ENCODE measurements at regions of chr19 and their contacts with region 1.

Region 1: DNA sequence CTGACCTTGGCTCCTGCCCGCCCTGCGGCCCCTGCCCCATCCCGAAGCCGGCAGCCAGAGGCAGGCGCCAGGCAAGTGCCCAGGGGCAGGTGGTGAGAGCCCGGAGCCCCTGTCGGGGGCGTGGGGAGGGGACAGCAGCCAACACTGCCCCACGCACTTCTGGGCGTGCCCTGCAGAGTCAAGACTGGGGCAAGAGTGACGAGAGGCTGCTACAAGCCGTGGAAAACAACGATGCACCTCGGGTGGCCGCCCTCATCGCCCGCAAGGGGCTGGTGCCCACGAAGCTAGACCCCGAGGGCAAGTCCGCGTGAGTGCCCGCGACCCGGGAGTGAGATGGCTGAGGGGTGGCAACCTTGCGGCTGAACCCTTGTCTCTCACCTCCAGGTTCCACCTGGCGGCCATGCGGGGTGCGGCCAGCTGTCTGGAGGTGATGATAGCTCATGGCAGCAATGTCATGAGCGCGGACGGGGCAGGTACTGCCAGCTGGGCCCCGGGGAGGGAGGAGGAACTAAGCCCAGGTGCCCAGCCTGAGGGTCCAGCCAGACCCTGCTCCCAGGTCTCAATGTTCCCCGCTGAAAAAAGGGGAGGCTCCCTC is 17.3 kb downstream of the ANKRD24 start:
- DNase-seq: peak; percentile 37
- H3K4me3 Mint-ChIP-seq: no peak overlapping the region
- H3K27ac Mint-ChIP-seq: no peak overlapping the region
- H3K4me1 Mint-ChIP-seq: peaks cover 12% of the 10 kb centered on the region
- H3K27me3 Mint-ChIP-seq: peaks cover 72% of the 10 kb centered on the region
- CTCF ChIP-seq: no peak

Region 2: DNA sequence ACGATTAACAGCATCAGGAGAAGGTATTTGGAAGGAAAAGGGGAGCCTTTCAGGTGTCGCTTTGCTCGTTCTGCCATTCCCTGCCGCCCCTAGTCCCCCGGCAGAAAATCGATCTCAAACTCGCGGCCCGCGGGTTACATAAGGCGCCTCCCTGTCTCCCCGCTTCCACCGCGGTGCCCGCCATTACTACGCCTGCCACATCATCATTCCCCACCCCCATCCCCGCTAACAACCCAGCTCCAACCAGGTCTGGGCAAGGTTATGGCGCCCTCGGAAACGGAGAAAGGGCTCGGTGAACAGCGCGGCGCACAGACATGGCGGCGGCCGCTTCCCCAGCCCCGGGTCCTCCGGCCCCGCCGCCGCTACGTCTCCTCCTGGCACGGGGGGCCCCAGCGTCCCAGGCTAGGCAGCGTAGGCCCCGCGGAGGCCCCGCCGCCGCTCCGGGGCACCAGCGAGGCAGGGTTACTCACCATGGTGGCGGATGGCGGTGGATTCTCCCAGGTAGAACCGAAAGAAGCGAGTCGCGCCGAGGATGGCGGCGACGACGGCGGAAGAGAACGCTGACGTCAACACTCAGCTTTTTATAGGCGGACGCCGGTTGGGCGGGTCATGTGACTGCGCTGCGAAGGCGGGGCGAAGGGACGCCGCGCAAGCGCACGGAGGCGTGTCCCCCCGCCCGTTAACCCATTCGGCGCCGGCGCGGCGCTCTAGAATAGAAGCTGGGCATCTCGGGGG is 214.7 kb before region 1 on chr19 and contains the start of gene EEF2:
- CTCF ChIA-PET with region 1: interaction called, 5 read pairs
- intact Hi-C with region 1: loop called (anchors 5 kb)
- DNase-seq: peak; percentile 83
- H3K4me3 Mint-ChIP-seq: peak within 1 kb of the TSS; percentile 65
- H3K27ac Mint-ChIP-seq: peak within 1 kb of the TSS; percentile 17
- H3K4me1 Mint-ChIP-seq: peaks cover 7% of the 10 kb centered on the region
- H3K27me3 Mint-ChIP-seq: no peaks in the 10 kb centered on the region
- CTCF ChIP-seq: no peak
- total RNA-seq, gene EEF2: 1,011 and 1,166 TPM in 2 replicates

Measured in Calu3 (cell line).